ENCODE measurements at regions of chr4 and their contacts with region 1.

Region 1: DNA sequence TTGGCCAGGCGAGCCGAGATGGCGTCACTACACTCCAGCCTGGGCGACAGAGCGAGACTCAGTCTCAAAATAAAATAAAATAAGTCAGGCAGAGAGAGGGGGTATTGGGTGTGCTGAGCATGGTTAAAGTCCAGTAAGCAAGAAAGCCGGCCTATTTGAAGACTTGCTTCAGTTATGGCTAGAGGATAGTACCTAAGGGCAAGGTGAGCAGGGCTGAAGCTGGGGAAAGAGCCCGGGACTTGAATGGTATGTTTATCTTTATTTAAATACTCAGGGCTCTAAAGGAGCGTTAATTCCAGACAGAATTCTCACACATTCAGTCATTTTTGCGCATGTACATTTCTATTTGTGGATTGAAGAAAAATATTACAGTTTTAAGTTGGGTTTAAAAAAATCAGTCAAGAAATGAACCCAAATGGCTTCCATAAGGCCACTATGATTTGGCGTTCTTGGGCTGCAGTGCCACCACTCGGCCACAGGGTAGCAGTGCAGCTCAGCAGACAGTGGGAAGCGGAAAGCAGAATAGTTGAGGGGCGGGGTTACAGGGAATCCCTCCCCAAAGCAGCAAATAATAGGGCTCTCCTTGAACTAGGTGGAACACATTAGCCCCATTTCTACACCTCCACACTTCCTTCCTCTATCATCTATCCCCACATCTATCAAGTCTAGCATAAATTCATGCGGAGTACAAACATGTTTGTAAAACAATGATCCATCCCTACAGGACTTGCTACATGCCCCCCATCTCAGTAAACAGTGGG is 37.2 kb upstream of the SH3D19 start:
- DNase-seq: peak; percentile 80
- ATAC-seq: peak; percentile 99
- H3K4me3 ChIP-seq: peak overlapping the region in 1 of 3 experiments; percentile 5; a peak in 1 of 6 replicates
- H3K27ac ChIP-seq: no peak overlapping the region
- H3K4me1 ChIP-seq: peaks cover 23% of the 10 kb centered on the region
- H3K27me3 ChIP-seq: no peaks in the 10 kb centered on the region; a peak in 1 of 5 replicates
- CTCF ChIP-seq: peak; percentile 97
- EP300 ChIP-seq: no peak
- POLR2A ChIP-seq: no peak
- RAD21 ChIP-seq: peak; percentile 94

Region 2: GRCh38 chr4:151117371-151117962 is 245.1 kb before region 1 on chr4:
- CTCF ChIA-PET with region 1: interaction called, 5 read pairs
- POLR2A ChIA-PET with region 1: no interaction called
- in situ Hi-C with region 1: loop called (anchors 25 kb)
- intact Hi-C with region 1: loop called (anchors 2 kb)
- DNase-seq: peak; percentile 78
- ATAC-seq: peak; percentile 85
- H3K4me3 ChIP-seq: no peak overlapping the region
- H3K27ac ChIP-seq: peak overlapping the region; percentile 21
- H3K4me1 ChIP-seq: peaks cover 11% of the 10 kb centered on the region
- H3K27me3 ChIP-seq: no peaks in the 10 kb centered on the region
- CTCF ChIP-seq: peak; percentile 79
- EP300 ChIP-seq: no peak
- POLR2A ChIP-seq: no peak
- RAD21 ChIP-seq: peak; percentile 64

Region 3: DNA sequence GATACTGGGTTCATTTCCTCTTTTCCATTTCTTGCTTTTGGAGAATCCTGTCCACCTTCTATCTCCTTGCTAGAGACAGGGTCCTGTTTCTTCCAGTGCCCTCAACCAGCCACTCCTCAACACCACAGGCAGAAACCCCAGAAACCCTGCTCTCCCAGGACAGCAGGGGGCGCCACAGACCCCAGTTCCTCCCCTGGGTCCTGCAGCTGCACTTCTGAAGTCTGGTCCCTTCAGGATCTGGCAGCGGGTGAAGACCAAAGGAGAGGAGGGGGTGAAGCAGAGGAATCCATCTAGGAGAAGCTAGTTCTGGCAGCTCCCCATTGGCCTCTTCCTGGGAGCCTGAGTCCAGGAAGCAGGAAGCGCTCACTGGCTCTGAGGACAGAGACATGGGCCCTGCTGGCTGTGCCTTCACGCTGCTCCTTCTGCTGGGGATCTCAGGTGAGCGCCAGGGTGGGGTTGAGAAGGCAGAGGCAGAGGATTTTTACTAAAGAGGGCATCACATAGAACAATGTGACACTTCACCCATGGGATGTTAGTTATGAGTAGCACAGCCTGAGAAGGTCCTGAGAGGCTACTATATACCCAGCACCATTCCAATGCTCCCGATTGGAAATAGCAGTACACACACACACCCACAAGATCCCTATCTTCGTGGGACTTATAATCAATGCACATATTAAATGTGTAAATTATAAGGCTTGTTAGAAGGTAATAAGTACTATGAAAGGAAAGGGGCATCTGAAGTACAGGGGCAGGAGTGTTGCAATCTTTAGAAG is 85.6 kb before region 1 on chr4 and contains the start of gene PRSS48:
- CTCF ChIA-PET with region 1: interaction called, 25 read pairs
- POLR2A ChIA-PET with region 1: no interaction called
- in situ Hi-C with region 1: loop called (anchors 5 kb)
- intact Hi-C with region 1: loop called (anchors 1 kb)
- DNase-seq: peak; percentile 55
- ATAC-seq: peak; percentile 89
- H3K4me3 ChIP-seq: no peak within 1 kb of the TSS
- H3K27ac ChIP-seq: no peak within 1 kb of the TSS
- H3K4me1 ChIP-seq: peaks cover 39% of the 10 kb centered on the region
- H3K27me3 ChIP-seq: no peaks in the 10 kb centered on the region
- CTCF ChIP-seq: peak; percentile 87
- EP300 ChIP-seq: no peak
- POLR2A ChIP-seq: no peak
- RAD21 ChIP-seq: peak; percentile 90
- total RNA-seq, gene PRSS48: not detected in 2 replicates

Region 4: GRCh38 chr4:151284534-151285245 is 77.9 kb before region 1 on chr4:
- CTCF ChIA-PET with region 1: no interaction called
- POLR2A ChIA-PET with region 1: no interaction called
- in situ Hi-C with region 1: loop called (anchors 5 kb)
- intact Hi-C with region 1: no loop called
- DNase-seq: no peak
- ATAC-seq: no peak
- H3K4me3 ChIP-seq: no peak overlapping the region
- H3K27ac ChIP-seq: no peak overlapping the region
- H3K4me1 ChIP-seq: peaks cover 41% of the 10 kb centered on the region
- H3K27me3 ChIP-seq: no peaks in the 10 kb centered on the region
- CTCF ChIP-seq: no peak
- EP300 ChIP-seq: no peak
- POLR2A ChIP-seq: no peak
- RAD21 ChIP-seq: no peak

Region 5: GRCh38 chr4:151408630-151409469 is 46.3 kb after region 1 on chr4 and contains the start of gene FHIP1A:
- CTCF ChIA-PET with region 1: no interaction called
- POLR2A ChIA-PET with region 1: no interaction called
- in situ Hi-C with region 1: no loop called
- intact Hi-C with region 1: loop called (anchors 5 kb)
- DNase-seq: peak; percentile 86
- ATAC-seq: peak; percentile 88
- H3K4me3 ChIP-seq: peak within 1 kb of the TSS; percentile 75 to 87 (median 82)
- H3K27ac ChIP-seq: peak within 1 kb of the TSS; percentile 75
- H3K4me1 ChIP-seq: peaks cover 41% of the 10 kb centered on the region
- H3K27me3 ChIP-seq: no peaks in the 10 kb centered on the region; a peak in 1 of 5 replicates
- CTCF ChIP-seq: no peak
- EP300 ChIP-seq: peak in 1 of 2 experiments; percentile 32; a peak in 1 of 4 replicates
- POLR2A ChIP-seq: peak; percentile 82 to 94
- RAD21 ChIP-seq: peak; percentile 39; the same call in 1 of the 2 replicates
- total RNA-seq, gene FHIP1A: 2.9 and 6.2 TPM in 2 replicates

Region 6: DNA sequence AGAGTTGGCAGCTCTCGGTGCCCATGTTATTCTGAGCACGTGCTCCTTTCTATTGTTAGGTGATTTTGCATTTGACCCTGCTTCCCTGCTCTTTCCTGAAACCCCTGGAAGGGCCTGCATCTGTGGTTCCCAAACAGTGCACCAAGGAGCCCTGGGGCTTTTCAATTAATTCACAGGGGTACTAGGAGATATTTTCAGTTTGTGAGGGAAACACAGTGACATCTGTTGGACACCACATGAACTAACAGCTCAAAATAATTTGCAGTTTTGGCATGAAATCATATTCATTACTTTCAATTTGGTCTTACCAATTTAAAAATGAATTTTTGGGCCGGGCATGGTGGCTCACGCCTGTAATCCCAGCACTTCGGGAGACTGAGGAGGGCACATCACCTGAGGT is 241.7 kb after region 1 on chr4:
- CTCF ChIA-PET with region 1: no interaction called
- POLR2A ChIA-PET with region 1: no interaction called
- in situ Hi-C with region 1: no loop called
- intact Hi-C with region 1: loop called (anchors 2 kb)
- DNase-seq: no peak
- ATAC-seq: peak; percentile 49; the same call in 2 of the 3 replicates
- H3K4me3 ChIP-seq: no peak overlapping the region
- H3K27ac ChIP-seq: no peak overlapping the region
- H3K4me1 ChIP-seq: no peaks in the 10 kb centered on the region
- H3K27me3 ChIP-seq: no peaks in the 10 kb centered on the region
- CTCF ChIP-seq: peak; percentile 35; the same call in 1 of the 2 replicates
- EP300 ChIP-seq: no peak
- POLR2A ChIP-seq: no peak
- RAD21 ChIP-seq: no peak

Region 7: DNA sequence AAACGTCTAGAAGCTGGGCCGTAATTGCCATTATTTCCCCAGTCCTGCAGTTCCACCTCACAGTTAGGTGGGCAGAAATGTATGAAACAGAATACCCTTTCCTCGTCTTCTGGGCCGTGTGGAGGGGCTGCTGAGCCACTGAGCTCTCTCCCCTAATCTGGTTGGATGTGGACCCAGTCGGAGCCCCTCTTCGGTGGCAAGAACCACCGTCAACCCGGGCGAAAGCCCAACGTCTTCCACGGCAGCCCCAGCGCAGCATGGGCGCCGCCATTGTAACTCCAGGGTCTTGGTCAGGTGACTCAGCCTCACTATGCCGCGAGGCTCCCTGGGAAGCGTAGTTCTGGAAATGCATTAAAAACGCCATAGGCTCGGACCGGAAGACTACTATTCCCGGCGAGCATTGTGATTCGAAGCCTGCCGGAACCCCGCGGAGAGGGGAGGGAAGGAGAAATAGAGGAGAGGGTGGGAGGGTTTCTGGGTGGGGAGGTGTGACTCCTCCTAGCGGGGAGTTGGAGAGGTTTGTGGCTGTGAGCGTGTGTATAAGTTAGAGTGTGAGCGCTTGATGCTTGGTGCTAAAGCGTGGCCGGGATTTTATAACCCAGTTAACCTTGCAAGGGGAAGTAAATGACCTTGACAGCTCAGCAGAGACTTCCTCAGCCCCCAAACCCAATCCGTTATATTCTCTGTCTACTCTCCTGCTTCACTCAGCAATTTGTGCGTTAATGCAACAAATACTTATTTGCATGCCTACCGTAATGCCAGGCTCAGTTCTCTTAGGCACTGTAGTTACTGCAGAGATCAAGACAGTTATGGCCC is 398.3 kb after region 1 on chr4 and contains the start of gene GATB:
- CTCF ChIA-PET with region 1: no interaction called
- POLR2A ChIA-PET with region 1: no interaction called
- in situ Hi-C with region 1: no loop called
- intact Hi-C with region 1: loop called (anchors 2 kb)
- DNase-seq: peak; percentile 97
- ATAC-seq: peak; percentile 99
- H3K4me3 ChIP-seq: peak within 1 kb of the TSS; percentile 96 to 99 (median 99)
- H3K27ac ChIP-seq: peak within 1 kb of the TSS; percentile 72
- H3K4me1 ChIP-seq: peaks cover 12% of the 10 kb centered on the region
- H3K27me3 ChIP-seq: peaks cover 0 to 4% of the 10 kb centered on the region in 2 experiments; a peak in 1 of 5 replicates
- CTCF ChIP-seq: peak; percentile 58
- EP300 ChIP-seq: no peak; a peak in 1 of 4 replicates
- POLR2A ChIP-seq: peak; percentile 67 to 95
- RAD21 ChIP-seq: 0 out of 2 replicates have a peak, but pooled peaks have one; percentile 7
- total RNA-seq, gene GATB: 32.3 and 49.2 TPM in 2 replicates

Region 8: DNA sequence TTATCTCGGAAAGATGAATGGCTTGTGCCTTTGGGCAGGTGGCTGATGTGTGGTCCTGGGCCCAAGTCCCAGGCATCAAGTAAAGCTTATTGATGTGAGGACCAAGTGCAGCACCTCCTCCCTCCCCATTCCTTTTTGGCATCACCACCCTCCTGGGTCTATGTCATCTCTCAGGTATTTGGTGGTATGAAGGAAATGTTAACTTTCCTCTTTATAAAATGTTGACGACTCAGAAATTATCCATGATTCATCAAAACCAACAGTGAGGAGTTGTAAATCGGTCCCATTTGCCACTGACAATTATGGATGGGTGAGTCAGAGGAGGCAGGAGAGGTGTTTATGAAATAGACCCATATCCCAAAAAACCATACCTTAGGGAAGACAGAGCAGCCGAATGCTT is 627.6 kb after region 1 on chr4:
- CTCF ChIA-PET with region 1: no interaction called
- POLR2A ChIA-PET with region 1: no interaction called
- in situ Hi-C with region 1: no loop called
- intact Hi-C with region 1: no loop called
- DNase-seq: no peak
- ATAC-seq: no peak
- H3K4me3 ChIP-seq: no peak overlapping the region
- H3K27ac ChIP-seq: no peak overlapping the region
- H3K4me1 ChIP-seq: no peaks in the 10 kb centered on the region
- H3K27me3 ChIP-seq: 0 out of 5 replicates have a peak, but pooled peaks cover 0 to 4% of the 10 kb centered on the region in 2 experiments
- CTCF ChIP-seq: no peak
- EP300 ChIP-seq: no peak
- POLR2A ChIP-seq: no peak
- RAD21 ChIP-seq: no peak